Activated T-helper 1 cell treated with anti-CD3 and anti-CD28 coated beads, Interleukin-12 subunit alpha, Interleukin-12 subunit beta, Interleukin-2, Interleukin-4 antibody, amounts not matched to agents 30 ng/mL and 10 ng/mL and 1 ng/mL, durations not matched to agents 14 hours and 24 hours and 36 hours (primary cell): ENCODE measurements at regions of chr2 and their contacts with region 1.

Region 1: GRCh38 chr2:94874277-94875008 is 3.2 kb downstream of the TEKT4 start:
- DNase-seq: peak; percentile 56
- H3K4me3 Mint-ChIP-seq: no peak overlapping the region
- H3K27ac Mint-ChIP-seq: no peak overlapping the region
- H3K4me1 Mint-ChIP-seq: no peaks in the 10 kb centered on the region
- H3K27me3 Mint-ChIP-seq: no peaks in the 10 kb centered on the region

Region 2: DNA sequence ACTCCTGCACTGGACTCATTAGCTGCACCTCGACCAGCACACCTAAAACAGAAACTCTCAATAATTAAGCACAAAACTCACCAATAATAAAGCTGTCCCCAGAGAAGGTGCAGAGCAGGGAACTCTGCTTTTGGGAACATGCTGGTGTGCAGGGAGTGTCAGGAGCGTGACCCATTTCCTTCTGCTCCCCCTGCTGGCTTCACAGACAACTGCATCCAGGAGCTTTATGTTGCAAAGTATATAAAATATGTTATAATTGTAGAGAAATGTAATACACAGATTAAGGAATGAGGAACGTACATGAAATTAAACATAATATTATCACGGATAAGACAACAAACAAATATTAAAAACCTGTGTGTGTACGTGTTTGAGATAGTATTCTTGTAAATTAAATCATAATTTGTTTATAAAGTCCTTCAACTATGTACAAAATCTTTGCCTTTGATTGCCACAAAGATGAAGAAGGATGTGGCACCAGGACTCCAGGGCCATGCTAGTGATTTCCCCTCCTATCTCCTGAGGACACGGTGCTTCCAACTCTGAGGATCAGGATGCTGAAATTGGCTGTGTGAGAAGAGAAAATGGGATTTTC is 82.5 kb after region 1 on chr2:
- intact Hi-C with region 1: loop called (anchors 10 kb)
- DNase-seq: no peak
- H3K4me3 Mint-ChIP-seq: no peak overlapping the region
- H3K27ac Mint-ChIP-seq: no peak overlapping the region
- H3K4me1 Mint-ChIP-seq: no peaks in the 10 kb centered on the region
- H3K27me3 Mint-ChIP-seq: peaks cover 15% of the 10 kb centered on the region